ENCODE measurements at regions of chr6 and their contacts with region 1.

Region 1: DNA sequence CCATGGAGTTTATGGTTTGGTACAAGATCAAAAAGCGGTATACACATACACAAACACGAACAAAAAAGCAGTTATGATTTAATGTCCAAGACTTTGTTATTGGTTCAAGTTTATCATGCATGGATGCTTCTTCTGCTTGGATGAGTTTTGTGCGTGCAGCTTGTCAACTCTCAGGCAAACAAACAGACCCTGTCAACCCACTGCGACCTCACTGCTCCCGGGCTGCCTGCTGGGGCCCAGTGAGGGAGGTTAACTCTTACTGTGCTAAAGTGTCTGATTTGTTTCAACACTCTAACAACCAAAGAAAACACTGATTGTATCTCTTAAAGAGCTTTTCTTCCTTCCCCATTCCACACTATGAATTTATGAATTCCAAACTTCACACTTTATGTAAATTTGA is 26.8 kb upstream of the DDR1 start:
- DNase-seq: peak; percentile 20

Region 2: GRCh38 chr6:30889921-30890645 is 32.5 kb after region 1 on chr6:
- intact Hi-C with region 1: loop called in 1 of 2 experiments (anchors 1 kb)
- DNase-seq: peak; percentile 34

Measured in posterior vena cava (tissue), 2 donors.